Activated T-helper 1 cell treated with anti-CD3 and anti-CD28 coated beads, Interleukin-12 subunit alpha, Interleukin-12 subunit beta, Interleukin-2, Interleukin-4 antibody, amounts not matched to agents 30 ng/mL and 10 ng/mL and 1 ng/mL, durations not matched to agents 14 hours and 24 hours and 36 hours (primary cell): ENCODE measurements at regions of chr11 and their contacts with region 1.

Region 1: GRCh38 chr11:76734456-76735420 is 48.4 kb upstream of the TSKU start:
- DNase-seq: no peak
- H3K4me3 Mint-ChIP-seq: no peak overlapping the region
- H3K27ac Mint-ChIP-seq: no peak overlapping the region
- H3K4me1 Mint-ChIP-seq: no peaks in the 10 kb centered on the region
- H3K27me3 Mint-ChIP-seq: peaks cover 9% of the 10 kb centered on the region

Region 2: GRCh38 chr11:76768088-76768908 is 33.6 kb after region 1 on chr11:
- intact Hi-C with region 1: loop called (anchors 2 kb)
- DNase-seq: peak; percentile 20
- H3K4me3 Mint-ChIP-seq: peak overlapping the region; percentile 70
- H3K27ac Mint-ChIP-seq: peak overlapping the region; percentile 47
- H3K4me1 Mint-ChIP-seq: peaks cover 43% of the 10 kb centered on the region
- H3K27me3 Mint-ChIP-seq: peaks cover 6% of the 10 kb centered on the region

Region 3: GRCh38 chr11:76799066-76799804 is 64.5 kb after region 1 on chr11:
- intact Hi-C with region 1: loop called (anchors 1 kb)
- DNase-seq: peak; percentile 69
- H3K4me3 Mint-ChIP-seq: no peak overlapping the region
- H3K27ac Mint-ChIP-seq: no peak overlapping the region
- H3K4me1 Mint-ChIP-seq: peaks cover 12% of the 10 kb centered on the region
- H3K27me3 Mint-ChIP-seq: peaks cover 48% of the 10 kb centered on the region

Region 4: GRCh38 chr11:76889411-76889975 is 154.8 kb after region 1 on chr11:
- intact Hi-C with region 1: no loop called
- DNase-seq: no peak
- H3K4me3 Mint-ChIP-seq: no peak overlapping the region
- H3K27ac Mint-ChIP-seq: no peak overlapping the region
- H3K4me1 Mint-ChIP-seq: peaks cover 16% of the 10 kb centered on the region
- H3K27me3 Mint-ChIP-seq: no peaks in the 10 kb centered on the region

Region 5: GRCh38 chr11:77091146-77091940 is 356.6 kb after region 1 on chr11:
- intact Hi-C with region 1: loop called (anchors 1 kb)
- DNase-seq: peak; percentile 69
- H3K4me3 Mint-ChIP-seq: no peak overlapping the region
- H3K27ac Mint-ChIP-seq: no peak overlapping the region
- H3K4me1 Mint-ChIP-seq: peaks cover 8% of the 10 kb centered on the region
- H3K27me3 Mint-ChIP-seq: peaks cover 3% of the 10 kb centered on the region

Region 6: GRCh38 chr11:77346906-77347603 is 612.3 kb after region 1 on chr11:
- intact Hi-C with region 1: no loop called
- DNase-seq: no peak
- H3K4me3 Mint-ChIP-seq: no peak overlapping the region
- H3K27ac Mint-ChIP-seq: no peak overlapping the region
- H3K4me1 Mint-ChIP-seq: no peaks in the 10 kb centered on the region
- H3K27me3 Mint-ChIP-seq: no peaks in the 10 kb centered on the region